Endothelial cell of umbilical vein (primary cell): ENCODE measurements at regions of chr2 and their contacts with region 1.

Region 1: DNA sequence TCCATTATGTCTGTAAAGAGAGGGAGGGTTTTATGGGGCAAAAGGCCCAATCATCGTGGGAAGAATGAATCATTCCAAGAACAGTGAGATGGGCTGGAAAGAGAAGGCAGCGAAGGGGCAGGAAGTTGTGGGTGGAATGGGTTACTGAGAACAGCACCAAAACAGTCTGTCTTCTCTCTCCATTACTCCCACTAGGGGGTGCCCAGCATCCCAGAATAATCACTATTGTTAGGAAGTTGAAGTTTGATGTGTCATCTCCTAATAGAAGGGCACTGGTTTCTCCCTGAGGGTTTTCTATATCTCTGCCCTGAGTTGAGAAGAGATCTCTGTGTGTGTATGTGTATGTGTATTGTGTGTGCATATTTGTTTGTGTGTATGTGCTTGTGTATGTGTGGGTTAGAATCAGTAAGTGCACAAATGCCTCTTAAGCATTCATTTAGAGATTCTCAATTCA is 76.6 kb upstream of the MAP4K3 start:
- DNase-seq: peak; percentile 98
- H3K4me3 ChIP-seq: no peak overlapping the region
- H3K27ac ChIP-seq: peak overlapping the region; percentile 80
- H3K4me1 ChIP-seq: peaks cover 54% of the 10 kb centered on the region
- H3K27me3 ChIP-seq: no peaks in the 10 kb centered on the region
- CTCF ChIP-seq: peak; percentile 68 to 83
- POLR2A ChIP-seq: no peak

Region 2: GRCh38 chr2:38966678-38967077 is 547.0 kb before region 1 on chr2:
- CTCF ChIA-PET with region 1: no interaction called
- POLR2A ChIA-PET with region 1: no interaction called
- dilution Hi-C with region 1: no loop called
- intact Hi-C with region 1: no loop called
- DNase-seq: no peak
- H3K4me3 ChIP-seq: no peak overlapping the region
- H3K27ac ChIP-seq: no peak overlapping the region
- H3K4me1 ChIP-seq: no peaks in the 10 kb centered on the region
- H3K27me3 ChIP-seq: no peaks in the 10 kb centered on the region
- CTCF ChIP-seq: no peak
- POLR2A ChIP-seq: no peak

Region 3: DNA sequence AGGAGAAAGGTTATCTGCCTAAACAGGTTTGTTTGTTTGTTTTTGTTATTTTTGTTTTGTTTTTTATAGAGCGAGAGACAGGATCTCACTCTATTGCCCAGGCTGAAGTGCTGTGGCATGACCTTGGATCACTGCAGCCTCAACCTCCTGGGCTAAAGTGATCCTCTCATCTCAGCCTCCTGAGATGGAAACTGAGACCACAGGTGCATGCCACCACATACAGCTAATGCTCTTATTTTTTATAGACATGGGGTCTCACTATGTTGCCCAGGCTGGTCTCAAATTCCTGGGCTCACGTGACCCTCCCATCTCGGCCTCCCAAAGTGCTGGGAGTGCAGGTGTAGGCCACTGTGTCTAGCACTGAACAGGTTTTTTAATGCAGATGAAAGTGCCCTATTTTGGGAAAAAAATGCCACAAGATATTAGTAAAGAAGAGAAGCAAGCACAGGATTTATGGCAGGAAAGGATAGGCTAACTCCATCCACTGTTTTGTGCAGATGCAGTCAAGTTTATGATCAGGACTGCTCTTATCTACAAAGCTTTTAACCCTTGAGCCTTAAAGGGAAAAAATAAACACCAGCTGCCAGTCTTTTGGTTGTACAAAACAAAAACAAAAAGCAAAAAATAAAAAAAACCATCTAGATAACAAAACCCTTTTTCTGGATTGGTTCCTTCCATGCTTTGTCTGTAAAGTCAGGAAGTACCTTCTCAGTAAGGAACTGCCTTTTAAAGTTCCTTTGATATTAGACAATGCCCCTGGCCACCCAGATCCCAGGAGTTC is 106.0 kb before region 1 on chr2:
- CTCF ChIA-PET with region 1: no interaction called
- POLR2A ChIA-PET with region 1: no interaction called
- dilution Hi-C with region 1: no loop called
- intact Hi-C with region 1: no loop called
- DNase-seq: peak; percentile 41
- H3K4me3 ChIP-seq: no peak overlapping the region
- H3K27ac ChIP-seq: no peak overlapping the region
- H3K4me1 ChIP-seq: peaks cover 41% of the 10 kb centered on the region
- H3K27me3 ChIP-seq: no peaks in the 10 kb centered on the region
- CTCF ChIP-seq: no peak
- POLR2A ChIP-seq: no peak

Region 4: DNA sequence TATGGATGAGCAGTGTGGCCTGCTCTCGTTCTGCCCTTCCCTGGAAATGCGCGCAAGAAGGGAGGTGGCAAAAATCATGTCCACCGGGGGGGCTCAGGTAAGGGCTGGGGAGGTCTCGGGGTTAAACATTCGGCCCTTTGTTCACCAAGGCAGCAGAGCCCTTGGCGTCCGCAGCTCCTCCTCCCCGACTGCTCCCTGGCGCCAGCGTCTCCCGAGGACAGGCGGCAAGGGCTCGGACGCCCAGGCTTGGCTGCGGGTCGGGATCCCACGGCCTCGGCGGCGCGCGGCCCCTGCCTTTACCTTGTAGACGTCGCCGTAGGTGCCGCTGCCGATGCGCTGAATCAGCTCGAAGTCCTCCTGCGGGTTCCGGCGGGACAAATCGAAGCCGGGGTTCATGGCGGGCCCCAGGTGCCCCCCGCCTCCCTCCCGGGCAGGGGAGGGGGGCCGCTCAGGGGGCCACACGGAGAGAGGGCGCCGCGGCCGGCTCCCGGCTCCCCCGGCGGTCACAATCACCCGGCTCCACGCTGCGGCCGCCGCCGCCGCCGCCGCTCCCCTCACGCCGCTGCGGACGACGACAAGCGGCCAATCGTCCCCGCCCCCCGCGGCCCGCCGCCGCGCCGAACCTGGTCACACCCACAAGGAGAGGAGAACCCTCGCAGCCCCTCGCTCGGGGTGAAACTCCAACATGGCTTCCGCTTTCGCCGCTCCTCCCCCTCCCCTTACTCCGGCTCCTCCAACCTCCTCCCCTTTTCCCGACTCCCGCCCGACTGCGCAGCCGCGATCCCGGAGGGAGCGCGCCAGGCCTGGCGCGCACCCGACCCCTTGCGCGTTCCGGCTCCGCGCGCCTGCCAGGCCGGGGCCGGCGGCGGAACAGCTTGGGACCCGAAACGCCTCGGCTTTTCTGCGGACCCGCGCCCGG is 76.8 kb before region 1 on chr2 and contains the start of gene MAP4K3:
- CTCF ChIA-PET with region 1: interaction called, 3 read pairs
- POLR2A ChIA-PET with region 1: no interaction called
- dilution Hi-C with region 1: no loop called
- intact Hi-C with region 1: loop called (anchors 1 kb)
- DNase-seq: peak; percentile 95
- H3K4me3 ChIP-seq: peak within 1 kb of the TSS; percentile 48 to 83 (median 56)
- H3K27ac ChIP-seq: peak within 1 kb of the TSS; percentile 73
- H3K4me1 ChIP-seq: peaks cover 35% of the 10 kb centered on the region
- H3K27me3 ChIP-seq: no peaks in the 10 kb centered on the region
- CTCF ChIP-seq: no peak
- POLR2A ChIP-seq: peak; percentile 59
- total RNA-seq, gene MAP4K3: 45.9 and 46.2 TPM in 2 replicates

Region 5: DNA sequence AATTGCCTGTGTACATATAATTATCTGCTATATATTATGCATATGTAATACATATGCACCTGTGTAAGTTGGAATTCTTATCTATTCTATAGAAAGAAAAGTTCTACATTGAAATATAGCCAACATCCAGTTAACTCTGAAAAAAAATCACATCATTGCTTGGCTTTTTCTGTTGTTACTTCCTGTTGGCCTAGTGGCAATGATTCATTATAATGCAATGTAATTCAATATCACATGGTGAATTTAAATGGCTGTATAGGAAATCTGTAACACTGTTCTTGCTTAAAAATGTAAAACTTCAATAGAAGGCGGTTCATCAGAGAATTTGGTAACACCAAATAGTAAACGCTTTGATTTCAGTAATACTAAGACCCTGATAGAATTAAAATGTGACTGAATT is 32.1 kb before region 1 on chr2:
- CTCF ChIA-PET with region 1: interaction called, 3 read pairs
- POLR2A ChIA-PET with region 1: no interaction called
- dilution Hi-C with region 1: no loop called
- intact Hi-C with region 1: loop called (anchors 1 kb)
- DNase-seq: peak; percentile 78
- H3K4me3 ChIP-seq: peak overlapping the region in 1 of 3 experiments; percentile 13
- H3K27ac ChIP-seq: peak overlapping the region; percentile 84
- H3K4me1 ChIP-seq: peaks cover 46% of the 10 kb centered on the region
- H3K27me3 ChIP-seq: no peaks in the 10 kb centered on the region
- CTCF ChIP-seq: no peak
- POLR2A ChIP-seq: no peak

Region 6: GRCh38 chr2:39530411-39530866 is 16.8 kb after region 1 on chr2:
- CTCF ChIA-PET with region 1: interaction called, 4 read pairs
- POLR2A ChIA-PET with region 1: interaction called, 4 read pairs
- dilution Hi-C with region 1: no loop called
- intact Hi-C with region 1: loop called (anchors 1 kb)
- DNase-seq: peak; percentile 77
- H3K4me3 ChIP-seq: no peak overlapping the region
- H3K27ac ChIP-seq: no peak overlapping the region
- H3K4me1 ChIP-seq: peaks cover 13% of the 10 kb centered on the region
- H3K27me3 ChIP-seq: peaks cover 0 to 3% of the 10 kb centered on the region in 2 experiments
- CTCF ChIP-seq: no peak
- POLR2A ChIP-seq: no peak

Region 7: GRCh38 chr2:39541011-39541930 is 27.6 kb after region 1 on chr2:
- CTCF ChIA-PET with region 1: no interaction called
- POLR2A ChIA-PET with region 1: no interaction called
- dilution Hi-C with region 1: no loop called
- intact Hi-C with region 1: no loop called
- DNase-seq: peak; percentile 64
- H3K4me3 ChIP-seq: no peak overlapping the region
- H3K27ac ChIP-seq: no peak overlapping the region
- H3K4me1 ChIP-seq: no peaks in the 10 kb centered on the region
- H3K27me3 ChIP-seq: no peaks in the 10 kb centered on the region
- CTCF ChIP-seq: no peak
- POLR2A ChIP-seq: no peak

Region 8: GRCh38 chr2:39568561-39569006 is 54.9 kb after region 1 on chr2:
- CTCF ChIA-PET with region 1: interaction called, 6 read pairs
- POLR2A ChIA-PET with region 1: no interaction called
- dilution Hi-C with region 1: no loop called
- intact Hi-C with region 1: loop called (anchors 1 kb)
- DNase-seq: peak; percentile 89
- H3K4me3 ChIP-seq: peak overlapping the region in 1 of 3 experiments; percentile 11
- H3K27ac ChIP-seq: peak overlapping the region; percentile 83
- H3K4me1 ChIP-seq: peaks cover 20% of the 10 kb centered on the region
- H3K27me3 ChIP-seq: no peaks in the 10 kb centered on the region
- CTCF ChIP-seq: no peak
- POLR2A ChIP-seq: no peak

Region 9: GRCh38 chr2:39696838-39697237 is 183.2 kb after region 1 on chr2:
- CTCF ChIA-PET with region 1: interaction called, 73 read pairs
- POLR2A ChIA-PET with region 1: interaction called, 4 read pairs
- dilution Hi-C with region 1: no loop called
- intact Hi-C with region 1: loop called (anchors 1 kb)
- DNase-seq: peak; percentile 84
- H3K4me3 ChIP-seq: no peak overlapping the region
- H3K27ac ChIP-seq: peak overlapping the region; percentile 13
- H3K4me1 ChIP-seq: peaks cover 18% of the 10 kb centered on the region
- H3K27me3 ChIP-seq: no peaks in the 10 kb centered on the region
- CTCF ChIP-seq: peak in 1 of 2 donors; percentile 17
- POLR2A ChIP-seq: no peak